Body of pancreas (tissue), 4 donors: ENCODE measurements at regions of chr2 and their contacts with region 1.

Region 1: GRCh38 chr2:64865073-64865830 is 123.9 kb upstream of the SLC1A4 start:
- DNase-seq: peak; percentile 70 to 77 (median 72)
- ATAC-seq: peak; percentile 94
- H3K4me3 ChIP-seq: peak overlapping the region; percentile 19 to 49
- H3K27ac ChIP-seq: peak overlapping the region; percentile 18 to 76 (median 75)
- H3K4me1 ChIP-seq: peaks cover 14% of the 10 kb centered on the region
- H3K27me3 ChIP-seq: no peaks in the 10 kb centered on the region
- CTCF ChIP-seq: peak in 5 of 7 experiments; percentile 34 to 97 (median 93)
- POLR2A ChIP-seq: peak in 2 of 3 donors; percentile 10 to 31

Region 2: DNA sequence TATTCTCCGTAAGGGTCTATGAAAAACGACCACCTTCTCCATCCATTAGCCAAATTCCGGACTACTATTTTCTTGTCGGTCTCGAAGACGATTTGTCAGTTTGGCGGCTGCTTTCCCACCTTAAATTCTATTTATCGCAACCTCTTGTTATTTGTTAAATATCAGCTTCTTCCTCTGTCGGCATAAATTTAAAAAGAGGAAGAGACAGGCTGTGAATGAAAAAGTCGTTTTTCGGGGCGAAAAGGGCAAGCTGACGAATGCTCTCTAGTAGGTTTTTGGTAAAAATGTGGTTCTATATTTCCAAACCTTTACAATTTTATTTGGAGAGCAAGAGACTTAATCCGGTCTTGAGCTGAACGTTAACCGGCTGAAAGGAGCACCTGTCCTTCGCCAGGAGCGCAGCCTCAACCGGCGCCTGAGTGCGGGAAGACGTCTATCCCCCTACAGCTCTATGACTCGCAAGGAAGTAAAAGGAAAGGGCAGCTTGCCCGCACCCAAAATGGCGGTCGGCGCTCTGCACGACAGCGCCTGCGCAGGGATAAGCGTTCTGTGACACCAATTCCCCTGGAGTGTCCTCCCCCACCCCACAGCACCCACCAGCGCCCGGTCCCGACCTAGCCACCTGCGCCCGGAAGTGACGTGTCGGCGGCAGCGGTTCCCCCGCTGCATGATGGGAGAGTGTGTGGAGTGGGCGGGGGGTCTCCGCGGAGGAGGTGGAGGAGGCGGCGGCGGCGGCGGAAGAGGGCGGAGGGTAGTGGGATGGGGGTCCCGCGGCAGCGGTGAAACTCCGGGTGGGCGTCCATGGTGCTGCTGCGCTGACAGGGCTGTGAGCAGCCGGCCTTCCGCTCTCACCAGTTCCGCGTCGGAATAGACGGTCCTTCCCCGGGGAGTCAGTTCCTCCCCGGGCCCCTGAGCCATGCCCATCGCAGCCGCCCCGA is 341.3 kb before region 1 on chr2 and contains the start of gene AFTPH:
- intact Hi-C with region 1: loop called (anchors 5 kb)
- DNase-seq: peak; percentile 99
- ATAC-seq: peak; percentile 97
- H3K4me3 ChIP-seq: peak within 1 kb of the TSS; percentile 61 to 100
- H3K27ac ChIP-seq: peak within 1 kb of the TSS; percentile 95 to 96 (median 95)
- H3K4me1 ChIP-seq: peaks cover 16% of the 10 kb centered on the region
- H3K27me3 ChIP-seq: no peaks in the 10 kb centered on the region
- CTCF ChIP-seq: peak in 1 of 7 experiments; percentile 17
- POLR2A ChIP-seq: peak; percentile 82 to 98 (median 95)
- total RNA-seq, gene AFTPH: 32.0 to 52.9 TPM

Region 3: GRCh38 chr2:64644177-64645004 is 220.9 kb before region 1 on chr2:
- intact Hi-C with region 1: loop called (anchors 10 kb)
- DNase-seq: peak; percentile 50 to 76 (median 66)
- ATAC-seq: peak; percentile 71
- H3K4me3 ChIP-seq: no peak overlapping the region
- H3K27ac ChIP-seq: peak overlapping the region; percentile 57 to 88 (median 76)
- H3K4me1 ChIP-seq: peaks cover 78% of the 10 kb centered on the region
- H3K27me3 ChIP-seq: no peaks in the 10 kb centered on the region
- CTCF ChIP-seq: no peak
- POLR2A ChIP-seq: peak in 2 of 3 donors; percentile 74 to 80

Region 4: GRCh38 chr2:64945973-64946768 is 80.9 kb after region 1 on chr2:
- intact Hi-C with region 1: no loop called
- DNase-seq: peak in 1 of 4 donors; percentile 24
- ATAC-seq: no peak
- H3K4me3 ChIP-seq: no peak overlapping the region
- H3K27ac ChIP-seq: no peak overlapping the region
- H3K4me1 ChIP-seq: no peaks in the 10 kb centered on the region
- H3K27me3 ChIP-seq: no peaks in the 10 kb centered on the region
- CTCF ChIP-seq: no peak
- POLR2A ChIP-seq: no peak

Region 5: DNA sequence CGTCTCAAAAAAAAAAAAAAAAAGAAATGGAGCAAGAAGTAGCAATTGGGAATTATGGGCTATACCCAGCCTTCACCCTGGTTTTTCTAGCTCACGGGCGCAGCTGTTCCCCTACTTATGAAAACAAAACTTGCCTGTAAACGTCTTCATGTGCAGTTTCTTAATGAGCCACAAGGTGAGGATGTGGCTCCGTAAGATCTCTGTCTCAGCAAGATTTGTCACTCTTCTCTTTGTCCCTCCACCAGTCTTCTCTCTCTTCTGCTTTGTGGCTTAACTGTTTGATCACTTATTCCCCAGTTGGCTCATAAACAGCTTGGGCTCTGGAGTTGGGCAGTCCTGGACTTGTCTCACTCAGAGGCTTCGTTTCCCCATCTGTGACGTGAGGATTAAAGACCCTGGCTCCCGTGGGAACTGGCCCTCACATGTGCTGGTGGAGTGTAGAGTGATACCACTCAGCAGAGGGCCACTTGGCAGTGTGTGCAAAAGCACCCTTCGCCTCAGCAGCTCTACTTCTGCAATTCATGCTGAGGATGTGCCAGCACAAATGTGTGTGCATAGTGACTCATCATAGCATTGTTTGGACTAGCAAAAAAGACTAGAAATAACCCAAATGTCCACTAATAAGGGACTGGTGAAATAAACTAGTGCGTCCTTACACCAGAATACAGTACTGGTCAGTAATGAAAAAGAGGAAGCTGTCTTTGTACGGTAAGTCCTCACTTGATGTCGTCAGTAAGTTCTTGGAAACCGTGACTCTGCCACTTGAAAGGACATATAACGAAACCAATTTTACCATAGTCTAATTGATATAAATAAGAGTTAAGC is 199.7 kb after region 1 on chr2:
- intact Hi-C with region 1: no loop called
- DNase-seq: peak; percentile 53 to 84 (median 70)
- ATAC-seq: peak; percentile 47
- H3K4me3 ChIP-seq: no peak overlapping the region
- H3K27ac ChIP-seq: peak overlapping the region; percentile 19 to 82 (median 58)
- H3K4me1 ChIP-seq: peaks cover 77% of the 10 kb centered on the region
- H3K27me3 ChIP-seq: no peaks in the 10 kb centered on the region
- CTCF ChIP-seq: peak; percentile 38 to 88 (median 60)
- POLR2A ChIP-seq: peak in 2 of 3 donors; percentile 15 to 42